ENCODE measurements at regions of chr15 and their contacts with region 1.

Region 1: GRCh38 chr15:83011271-83012075 is at the start of gene C15orf40:
- DNase-seq: peak; percentile 83 to 88
- ATAC-seq: peak; percentile 82 to 90
- H3K4me3 ChIP-seq: peak within 1 kb of the TSS; percentile 90 to 100 (median 95)
- H3K27ac ChIP-seq: peak within 1 kb of the TSS; percentile 82 to 92 (median 86)
- H3K4me1 ChIP-seq: peaks cover 26 to 29% of the 10 kb centered on the region in 2 donors
- H3K27me3 ChIP-seq: no peaks in the 10 kb centered on the region
- CTCF ChIP-seq: peak; percentile 51 to 81 (median 71)
- POLR2A ChIP-seq: peak; percentile 56 to 75
- total RNA-seq, gene C15orf40: 5.9 to 14.6 (median 9.5) TPM

Region 2: DNA sequence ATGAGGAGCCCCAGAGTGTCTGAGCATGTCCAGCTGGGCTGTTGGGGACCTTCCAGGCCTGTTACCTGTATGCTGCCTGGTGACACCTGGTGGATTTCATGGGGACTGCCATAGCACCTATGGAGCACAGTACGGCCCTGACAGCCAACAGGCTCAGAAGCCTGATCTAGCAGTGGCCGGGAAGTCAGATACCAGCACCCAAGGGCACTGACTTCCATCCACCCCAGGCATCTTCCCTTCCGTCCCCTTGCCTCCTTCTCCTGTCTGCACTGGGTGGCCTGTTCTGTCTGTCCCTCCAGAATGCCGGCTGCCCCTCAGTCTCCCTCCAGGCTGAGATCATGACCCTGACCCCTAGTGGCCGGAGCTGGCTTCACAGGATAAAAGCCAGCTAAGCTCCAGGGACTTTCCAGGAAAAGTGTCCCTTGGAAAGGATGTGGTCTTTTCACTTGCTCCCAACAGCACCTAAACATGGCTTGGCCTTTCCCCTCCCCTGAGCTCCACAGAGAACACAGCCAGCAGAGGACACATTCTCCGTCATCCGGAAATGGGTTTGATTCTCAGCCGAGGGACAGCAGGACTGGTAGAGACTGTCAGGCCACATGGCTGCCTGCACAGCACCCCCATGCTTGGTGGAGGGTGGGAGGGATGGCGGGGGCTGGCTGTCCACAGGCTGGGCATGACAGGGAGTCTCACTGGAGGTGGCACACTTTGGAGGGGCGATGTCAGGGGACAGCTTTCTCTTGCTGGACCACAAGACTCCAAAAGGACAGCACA is 480.7 kb before region 1 on chr15:
- in situ Hi-C with region 1: loop called in 3 of 4 experiments (anchors 10 to 25 kb)
- intact Hi-C with region 1: loop called (anchors 10 kb)
- DNase-seq: peak in 1 of 2 donors; percentile 49
- ATAC-seq: peak; percentile 56 to 89
- H3K4me3 ChIP-seq: peak overlapping the region in 3 of 4 donors; percentile 24 to 28 (median 24)
- H3K27ac ChIP-seq: no peak overlapping the region
- H3K4me1 ChIP-seq: no peaks in the 10 kb centered on the region
- H3K27me3 ChIP-seq: no peaks in the 10 kb centered on the region
- CTCF ChIP-seq: peak; percentile 30 to 84 (median 72)
- POLR2A ChIP-seq: no peak

Region 3: GRCh38 chr15:82540055-82540983 is 471.2 kb before region 1 on chr15 and contains the start of gene RPS17:
- in situ Hi-C with region 1: loop called in 3 of 4 experiments (anchors 10 to 25 kb)
- intact Hi-C with region 1: loop called (anchors 10 kb)
- DNase-seq: peak; percentile 89 to 94
- ATAC-seq: peak; percentile 91 to 95
- H3K4me3 ChIP-seq: peak within 1 kb of the TSS; percentile 82 to 88 (median 85)
- H3K27ac ChIP-seq: peak within 1 kb of the TSS; percentile 80 to 91 (median 83)
- H3K4me1 ChIP-seq: peaks cover 8 to 11% of the 10 kb centered on the region in 2 donors
- H3K27me3 ChIP-seq: no peaks in the 10 kb centered on the region
- CTCF ChIP-seq: peak; percentile 99 to 100 (median 99)
- POLR2A ChIP-seq: peak; percentile 85 to 91
- total RNA-seq, gene RPS17: 1,547 to 2,112 (median 1,667) TPM

Region 4: GRCh38 chr15:82749951-82750830 is 261.3 kb before region 1 on chr15:
- in situ Hi-C with region 1: no loop called
- intact Hi-C with region 1: loop called (anchors 5 kb)
- DNase-seq: peak; percentile 91 to 94
- ATAC-seq: peak; percentile 91 to 96
- H3K4me3 ChIP-seq: peak overlapping the region; percentile 66 to 86 (median 80)
- H3K27ac ChIP-seq: peak overlapping the region; percentile 88 to 96 (median 93)
- H3K4me1 ChIP-seq: peaks cover 40 to 45% of the 10 kb centered on the region in 2 donors
- H3K27me3 ChIP-seq: no peaks in the 10 kb centered on the region
- CTCF ChIP-seq: no peak
- POLR2A ChIP-seq: peak; percentile 98 to 99

Region 5: DNA sequence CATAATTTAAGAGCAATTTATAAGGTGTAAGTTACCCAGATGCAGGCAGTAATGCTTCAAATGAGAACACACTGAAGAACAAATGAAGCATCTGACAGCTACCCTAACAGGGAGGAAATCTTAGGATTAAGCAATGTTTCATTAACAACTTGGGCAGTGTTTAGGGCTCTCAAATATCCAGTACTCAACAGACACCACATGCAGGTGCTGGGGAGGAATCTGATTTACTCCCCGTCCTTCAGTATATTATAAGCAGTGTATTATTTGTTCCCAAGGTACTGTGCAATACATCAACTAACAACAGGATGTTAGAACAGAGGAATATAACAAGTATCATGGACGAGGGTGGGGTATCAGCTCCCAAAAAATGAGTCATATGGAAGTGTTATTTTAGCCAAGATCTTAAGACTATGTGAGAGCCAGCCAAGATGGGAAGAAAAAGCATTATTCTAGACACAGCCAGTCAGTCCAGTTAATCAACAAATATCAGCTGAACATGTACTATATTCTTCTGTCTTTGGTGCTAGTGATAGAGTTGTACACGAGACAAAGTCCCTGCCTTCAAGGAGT is 35.2 kb after region 1 on chr15:
- in situ Hi-C with region 1: no loop called
- intact Hi-C with region 1: loop called (anchors 5 kb)
- DNase-seq: no peak
- ATAC-seq: peak; percentile 75 to 92
- H3K4me3 ChIP-seq: no peak overlapping the region
- H3K27ac ChIP-seq: peak overlapping the region; percentile 61 to 77 (median 75)
- H3K4me1 ChIP-seq: peaks cover 29 to 41% of the 10 kb centered on the region in 2 donors
- H3K27me3 ChIP-seq: no peaks in the 10 kb centered on the region
- CTCF ChIP-seq: no peak
- POLR2A ChIP-seq: no peak

Region 6: GRCh38 chr15:83108266-83109226 is 97.1 kb after region 1 on chr15:
- in situ Hi-C with region 1: loop called in 3 of 4 experiments (anchors 5 to 10 kb)
- intact Hi-C with region 1: loop called (anchors 1 kb)
- DNase-seq: peak; percentile 46 to 57
- ATAC-seq: peak; percentile 26 to 30
- H3K4me3 ChIP-seq: peak overlapping the region; percentile 64 to 88 (median 76)
- H3K27ac ChIP-seq: peak overlapping the region; percentile 80 to 91 (median 88)
- H3K4me1 ChIP-seq: peaks cover 34 to 35% of the 10 kb centered on the region in 2 donors
- H3K27me3 ChIP-seq: no peaks in the 10 kb centered on the region
- CTCF ChIP-seq: no peak
- POLR2A ChIP-seq: peak in 1 of 2 donors; percentile 33

Region 7: GRCh38 chr15:83207622-83208411 is 196.3 kb after region 1 on chr15 and contains the start of gene HDGFL3:
- in situ Hi-C with region 1: no loop called
- intact Hi-C with region 1: loop called (anchors 5 kb)
- DNase-seq: peak; percentile 17 to 31
- ATAC-seq: peak; percentile 61 to 67
- H3K4me3 ChIP-seq: peak within 1 kb of the TSS; percentile 65 to 91 (median 75)
- H3K27ac ChIP-seq: peak within 1 kb of the TSS; percentile 65 to 79 (median 76)
- H3K4me1 ChIP-seq: peaks cover 7 to 9% of the 10 kb centered on the region in 2 donors
- H3K27me3 ChIP-seq: peaks cover 10 to 27% (median 23%) of the 10 kb centered on the region in 3 donors
- CTCF ChIP-seq: no peak
- POLR2A ChIP-seq: no peak
- total RNA-seq, gene HDGFL3: 1.00 to 7.1 (median 4.1) TPM

Measured in gastrocnemius medialis (tissue), 4 donors.